OCI-LY7 (cell line): ENCODE measurements at regions of chr2 and their contacts with region 1.

Region 1: DNA sequence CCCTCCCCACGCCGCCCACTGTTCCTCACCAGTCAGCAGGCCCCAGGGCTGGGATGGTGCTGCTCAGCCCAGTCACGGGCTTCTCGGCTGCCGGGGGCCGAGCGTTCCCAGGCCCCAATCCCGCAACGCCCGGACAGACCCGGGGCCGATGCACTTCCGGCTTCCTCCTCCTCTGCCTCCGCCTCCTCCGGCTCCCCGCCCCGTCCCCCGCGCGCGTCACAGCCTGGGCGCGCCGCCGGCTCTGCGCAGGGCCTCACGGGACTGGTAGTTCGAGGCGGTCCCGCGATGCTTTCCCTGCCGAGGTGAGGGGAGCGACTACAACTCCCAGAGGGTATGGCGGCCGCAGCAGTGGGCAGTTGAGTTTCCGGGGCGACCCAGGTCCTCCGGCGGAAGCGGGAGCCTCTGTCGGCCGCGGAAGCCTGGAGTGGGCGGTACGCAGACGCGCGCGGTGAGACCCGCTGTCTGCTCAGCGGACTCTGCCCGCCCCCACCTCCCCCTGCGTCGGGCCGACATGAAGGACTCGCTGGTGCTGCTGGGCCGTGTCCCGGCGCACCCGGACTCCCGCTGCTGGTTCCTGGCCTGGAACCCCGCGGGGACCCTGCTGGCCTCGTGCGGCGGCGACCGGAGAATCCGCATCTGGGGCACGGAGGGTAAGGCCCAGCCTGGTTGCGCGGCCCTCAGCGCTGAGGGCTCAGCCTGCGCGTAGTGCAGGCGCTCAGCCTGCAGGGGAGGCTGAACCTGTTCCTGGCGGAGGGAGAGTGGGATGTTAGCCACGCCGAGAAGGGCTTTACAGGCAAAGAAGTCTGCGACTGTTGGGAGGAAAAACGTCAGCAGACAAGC is at the starts of genes CIAO1 and TMEM127:
- DNase-seq: peak; percentile 98
- H3K4me3 ChIP-seq: peak within 1 kb of the TSS; percentile 79
- H3K27ac ChIP-seq: peak within 1 kb of the TSS; percentile 62
- H3K4me1 ChIP-seq: peaks cover 23% of the 10 kb centered on the region
- CTCF ChIP-seq: peak; percentile 58
- total RNA-seq, gene CIAO1: 89.8 and 128 TPM in 2 replicates
- total RNA-seq, gene TMEM127: 12.0 and 12.1 TPM in 2 replicates

Region 2: GRCh38 chr2:96145036-96145847 is 120.8 kb before region 1 on chr2 and contains the start of gene DUSP2:
- CTCF ChIA-PET with region 1: no interaction called
- POLR2A ChIA-PET with region 1: no interaction called
- intact Hi-C with region 1: loop called (anchors 1 kb)
- DNase-seq: peak; percentile 90
- H3K4me3 ChIP-seq: peak within 1 kb of the TSS; percentile 97
- H3K27ac ChIP-seq: peak within 1 kb of the TSS; percentile 97
- H3K4me1 ChIP-seq: peaks cover 68% of the 10 kb centered on the region
- CTCF ChIP-seq: no peak
- total RNA-seq, gene DUSP2: 94.7 and 110 TPM in 2 replicates

Region 3: DNA sequence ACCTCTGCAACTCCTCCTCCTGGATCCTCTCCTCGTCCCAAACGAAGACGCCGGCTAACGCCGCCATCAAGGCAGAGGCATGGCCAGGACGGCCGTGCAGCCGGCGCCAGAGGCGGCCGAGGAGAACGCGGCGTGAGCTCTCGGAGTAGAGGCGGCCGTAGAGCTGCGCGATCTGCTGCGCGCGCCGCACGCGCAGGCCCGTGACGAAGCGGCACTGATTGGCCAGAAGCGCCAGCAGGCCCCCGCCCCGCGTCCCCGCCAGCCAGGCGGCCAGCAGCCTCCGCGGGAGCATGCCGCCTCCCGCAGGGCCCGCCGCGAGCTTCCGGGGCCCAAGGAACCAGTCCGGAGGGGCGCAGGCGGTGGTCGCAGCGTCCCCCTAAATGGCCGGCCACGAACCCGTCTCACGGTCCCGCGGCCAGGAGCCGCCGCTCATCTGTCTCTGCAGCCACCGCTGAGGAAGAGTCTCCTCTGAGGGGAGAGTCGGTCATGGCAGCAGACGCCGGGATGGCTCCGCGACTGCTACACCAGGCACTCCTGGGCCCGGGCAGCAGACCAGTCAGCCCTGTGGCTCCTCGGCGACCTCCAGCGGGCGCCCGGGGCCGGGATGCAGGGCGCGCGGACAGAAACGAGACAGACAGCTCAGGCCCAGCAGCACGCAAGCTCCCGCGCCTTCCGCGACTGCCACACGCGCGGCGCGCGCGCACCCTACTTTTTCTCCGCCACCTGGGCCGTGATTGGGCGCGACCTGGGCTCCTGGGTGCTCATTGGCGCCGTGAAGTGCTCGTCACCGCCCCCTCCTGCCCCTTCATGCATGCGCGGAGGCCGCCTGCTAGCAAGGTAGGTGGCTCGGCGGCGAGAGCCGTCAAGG is 57.7 kb before region 1 on chr2 and contains the start of gene STARD7:
- CTCF ChIA-PET with region 1: interaction called, 3 read pairs
- POLR2A ChIA-PET with region 1: interaction called, 8 read pairs
- intact Hi-C with region 1: loop called (anchors 1 kb)
- DNase-seq: peak; percentile 99
- H3K4me3 ChIP-seq: peak within 1 kb of the TSS; percentile 90
- H3K27ac ChIP-seq: peak within 1 kb of the TSS; percentile 81
- H3K4me1 ChIP-seq: peaks cover 64% of the 10 kb centered on the region
- CTCF ChIP-seq: peak; percentile 30; the same call in 1 of the 2 replicates
- total RNA-seq, gene STARD7: 208 and 239 TPM in 2 replicates

Region 4: DNA sequence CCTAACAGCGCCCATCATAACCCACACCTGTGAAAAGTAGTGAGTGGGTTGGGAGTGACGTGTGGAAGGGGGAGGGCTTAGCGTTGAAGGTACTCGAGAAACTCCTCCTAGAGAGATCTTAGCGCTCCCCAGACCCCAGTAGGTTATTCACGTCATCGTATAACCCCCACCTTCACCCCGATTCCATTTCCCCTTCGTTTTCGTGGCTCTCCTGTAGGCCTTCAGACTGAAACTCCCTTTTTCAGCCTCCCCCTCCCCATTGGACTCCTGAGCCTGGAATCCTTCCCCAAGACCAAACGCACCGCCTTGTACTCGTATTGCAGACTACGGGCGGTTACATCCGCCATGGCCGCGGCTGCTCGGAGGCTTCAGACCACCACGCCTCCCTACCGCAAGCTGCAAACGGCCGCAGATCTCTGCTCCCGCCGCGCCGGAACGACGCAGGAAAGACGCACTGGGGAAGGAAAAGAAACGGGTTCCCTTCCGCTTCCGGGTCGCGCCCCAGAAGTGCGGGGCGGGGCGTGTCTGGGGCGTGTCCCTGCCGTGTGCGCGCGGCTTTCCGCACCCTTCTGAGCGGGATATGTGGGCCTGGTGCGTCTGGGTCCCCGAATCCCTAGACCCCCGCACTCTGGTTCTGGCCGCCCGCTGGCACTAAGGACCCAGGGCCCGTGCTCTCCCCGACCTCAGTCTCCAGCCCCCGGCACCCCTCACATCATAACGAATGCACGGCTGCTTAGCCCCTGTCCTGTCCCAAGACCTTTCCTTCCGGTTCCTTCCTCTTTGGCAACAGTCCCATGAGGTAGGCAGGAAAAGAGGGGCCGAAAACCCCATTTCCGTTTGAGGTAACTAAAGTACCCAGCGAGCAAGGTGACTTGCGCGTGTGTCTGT is 39.3 kb after region 1 on chr2 and contains the start of gene SNRNP200:
- CTCF ChIA-PET with region 1: no interaction called
- POLR2A ChIA-PET with region 1: interaction called, 3 read pairs
- intact Hi-C with region 1: loop called (anchors 1 kb)
- DNase-seq: peak; percentile 91
- H3K4me3 ChIP-seq: peak within 1 kb of the TSS; percentile 95
- H3K27ac ChIP-seq: peak within 1 kb of the TSS; percentile 73
- H3K4me1 ChIP-seq: peaks cover 28% of the 10 kb centered on the region
- CTCF ChIP-seq: no peak
- total RNA-seq, gene SNRNP200: 76.0 and 79.3 TPM in 2 replicates